ENCODE measurements at regions of chr16 and their contacts with region 1.

Region 1: GRCh38 chr16:807347-808084 is 7.0 kb upstream of the GNG13 start:
- DNase-seq: peak; percentile 86 to 96
- H3K4me3 ChIP-seq: peak overlapping the region; percentile 97
- H3K27ac ChIP-seq: peak overlapping the region; percentile 76
- H3K4me1 ChIP-seq: 0 out of 2 replicates have a peak, but pooled peaks cover 6% of the 10 kb centered on the region
- H3K27me3 ChIP-seq: peaks cover 4% of the 10 kb centered on the region; the same call in 1 of the 2 replicates
- CTCF ChIP-seq: no peak

Region 2: DNA sequence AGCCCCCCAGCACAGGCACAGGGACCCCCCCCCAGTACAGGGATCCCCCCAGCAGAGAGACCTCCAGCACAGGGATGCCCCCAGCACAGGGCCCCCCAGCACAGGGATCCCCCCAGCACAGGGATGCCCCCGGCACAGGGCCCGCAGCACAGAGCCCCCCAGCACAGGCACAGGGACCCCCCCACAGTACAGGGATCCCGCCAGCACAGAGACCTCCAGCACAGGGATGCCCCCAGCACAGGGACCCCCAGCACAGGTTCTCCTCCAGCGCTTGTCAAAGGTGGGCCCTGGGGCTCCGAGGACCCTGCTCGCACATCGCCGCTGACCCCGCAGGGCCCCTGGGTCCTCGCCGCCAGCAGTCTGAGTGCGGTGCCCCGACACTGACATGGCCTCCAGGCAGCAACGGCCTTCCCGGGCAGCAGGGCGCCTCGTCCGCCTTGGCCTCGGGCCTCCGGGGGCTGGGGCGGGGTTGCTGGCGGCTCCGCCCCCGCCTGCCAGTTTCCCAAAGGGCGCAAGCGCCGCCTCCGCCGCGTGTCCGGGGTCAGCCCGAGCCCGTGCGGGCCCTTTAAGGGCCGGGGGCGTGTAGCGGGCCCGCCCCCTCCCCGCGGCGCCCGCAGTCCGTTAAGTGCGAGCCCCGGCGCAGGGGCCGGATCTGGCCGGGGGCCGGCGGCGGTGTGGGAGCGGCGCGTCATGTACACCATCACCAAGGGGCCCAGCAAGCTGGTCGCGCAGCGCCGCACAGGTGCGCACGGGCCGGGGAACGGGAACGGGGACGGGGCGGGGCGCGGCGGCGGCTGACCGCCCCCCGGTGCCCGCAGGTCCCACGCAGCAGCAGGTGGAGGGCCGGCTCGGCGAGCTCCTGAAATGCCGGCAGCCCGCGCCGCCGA is 166.0 kb before region 1 on chr16 and contains the start of gene MCRIP2:
- CTCF ChIA-PET with region 1: interaction called, 13 read pairs
- POLR2A ChIA-PET with region 1: no interaction called
- intact Hi-C with region 1: no loop called
- DNase-seq: peak; percentile 46 to 95
- H3K4me3 ChIP-seq: peak within 1 kb of the TSS; percentile 69
- H3K27ac ChIP-seq: peak within 1 kb of the TSS; percentile 23; the same call in 1 of the 2 replicates
- H3K4me1 ChIP-seq: peaks cover 39% of the 10 kb centered on the region
- H3K27me3 ChIP-seq: no peaks in the 10 kb centered on the region
- CTCF ChIP-seq: no peak
- total RNA-seq, gene MCRIP2: 64.2 and 69.6 TPM in 2 replicates

Region 3: DNA sequence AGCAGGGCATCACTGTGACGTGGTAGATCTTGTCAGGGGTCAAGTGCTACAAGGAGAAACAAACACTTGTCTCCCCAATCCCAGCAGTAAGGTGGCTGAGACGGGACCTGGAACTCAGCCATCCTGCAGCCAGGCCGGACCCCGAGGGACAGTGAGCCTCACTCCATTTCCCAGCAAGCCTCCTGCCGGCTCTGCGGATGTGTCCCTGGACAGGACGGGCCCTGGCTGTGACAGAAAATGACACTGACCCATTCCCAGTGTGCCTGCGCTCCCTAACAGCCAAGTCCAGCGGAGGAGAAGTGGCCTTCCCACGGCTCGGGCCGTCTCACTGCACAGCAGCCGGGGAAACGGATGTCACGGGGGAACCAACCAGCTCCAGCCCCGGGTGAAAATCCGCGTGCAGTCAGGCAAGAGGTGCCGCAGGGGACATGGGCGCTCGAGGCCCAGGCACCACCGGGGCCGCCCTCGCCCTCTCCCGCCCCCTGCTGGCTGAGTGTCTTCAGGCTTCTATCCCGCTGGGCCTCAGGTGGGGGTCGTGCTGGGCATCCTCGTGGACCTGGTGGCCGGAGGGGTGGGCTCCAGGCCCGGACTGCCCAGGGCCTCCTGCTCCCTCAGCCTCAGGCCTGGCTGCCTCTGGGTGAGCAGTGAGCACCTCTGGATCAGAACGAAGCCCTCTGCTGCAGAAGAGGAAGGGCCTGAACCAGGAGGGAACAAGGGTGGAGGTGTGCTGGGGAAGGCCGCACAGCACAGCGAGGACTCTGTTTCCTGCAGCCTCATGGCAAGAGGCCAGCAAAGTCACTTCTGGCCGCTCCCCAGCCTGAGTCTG is 73.9 kb before region 1 on chr16:
- CTCF ChIA-PET with region 1: no interaction called
- POLR2A ChIA-PET with region 1: no interaction called
- intact Hi-C with region 1: no loop called
- DNase-seq: peak in 1 of 2 experiments; percentile 22
- H3K4me3 ChIP-seq: no peak overlapping the region
- H3K27ac ChIP-seq: no peak overlapping the region
- H3K4me1 ChIP-seq: no peaks in the 10 kb centered on the region
- H3K27me3 ChIP-seq: no peaks in the 10 kb centered on the region
- CTCF ChIP-seq: no peak

Region 4: GRCh38 chr16:867461-868385 is 60.2 kb after region 1 on chr16:
- CTCF ChIA-PET with region 1: no interaction called
- POLR2A ChIA-PET with region 1: no interaction called
- intact Hi-C with region 1: no loop called
- DNase-seq: no peak
- H3K4me3 ChIP-seq: no peak overlapping the region
- H3K27ac ChIP-seq: no peak overlapping the region
- H3K4me1 ChIP-seq: no peaks in the 10 kb centered on the region
- H3K27me3 ChIP-seq: peaks cover 23% of the 10 kb centered on the region
- CTCF ChIP-seq: no peak

Region 5: DNA sequence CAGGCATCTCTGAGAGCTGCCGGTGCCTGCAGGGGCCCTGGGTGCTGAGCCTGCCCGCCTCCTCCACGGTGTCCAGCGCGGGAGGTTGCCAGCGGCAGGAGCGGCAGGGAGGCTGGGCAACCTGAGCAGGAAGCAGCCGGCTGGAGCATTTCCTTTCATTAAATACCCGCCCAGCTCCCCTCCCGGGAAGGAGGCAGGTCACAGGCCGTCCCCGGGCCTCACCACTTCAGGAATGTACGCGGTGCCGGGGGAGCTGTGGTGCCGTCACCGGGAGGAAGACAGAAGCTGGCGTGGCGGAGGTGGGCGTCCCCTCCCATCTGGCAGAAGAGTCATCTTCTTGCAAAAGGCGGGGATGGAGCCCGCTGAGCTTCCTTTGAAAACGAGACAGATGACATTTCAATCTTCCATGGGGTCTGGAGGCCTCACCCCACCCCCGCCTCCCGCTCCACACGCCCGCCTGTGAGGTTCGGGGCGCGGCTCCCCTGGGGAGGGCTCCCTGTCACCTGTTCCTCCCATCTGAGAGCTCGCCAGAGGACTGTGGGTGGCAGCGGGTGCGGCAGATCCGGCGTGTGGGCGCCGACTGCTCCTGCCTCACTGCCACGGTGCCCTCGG is 190.0 kb after region 1 on chr16:
- CTCF ChIA-PET with region 1: no interaction called
- POLR2A ChIA-PET with region 1: interaction called, 20 read pairs
- intact Hi-C with region 1: no loop called
- DNase-seq: peak; percentile 69 to 88
- H3K4me3 ChIP-seq: peak overlapping the region; percentile 44; the same call in 1 of the 2 replicates
- H3K27ac ChIP-seq: no peak overlapping the region
- H3K4me1 ChIP-seq: peaks cover 21% of the 10 kb centered on the region
- H3K27me3 ChIP-seq: peaks cover 57% of the 10 kb centered on the region
- CTCF ChIP-seq: no peak

Region 6: GRCh38 chr16:1102921-1103635 is 295.6 kb after region 1 on chr16:
- CTCF ChIA-PET with region 1: interaction called, 10 read pairs
- POLR2A ChIA-PET with region 1: no interaction called
- intact Hi-C with region 1: loop called (anchors 2 kb)
- DNase-seq: peak in 1 of 2 experiments; percentile 79
- H3K4me3 ChIP-seq: no peak overlapping the region
- H3K27ac ChIP-seq: no peak overlapping the region
- H3K4me1 ChIP-seq: no peaks in the 10 kb centered on the region
- H3K27me3 ChIP-seq: peaks cover 49% of the 10 kb centered on the region
- CTCF ChIP-seq: peak; percentile 67

Measured in PC-9 (cell line).